ENCODE measurements at regions of chr6 and their contacts with region 1.

Region 1: DNA sequence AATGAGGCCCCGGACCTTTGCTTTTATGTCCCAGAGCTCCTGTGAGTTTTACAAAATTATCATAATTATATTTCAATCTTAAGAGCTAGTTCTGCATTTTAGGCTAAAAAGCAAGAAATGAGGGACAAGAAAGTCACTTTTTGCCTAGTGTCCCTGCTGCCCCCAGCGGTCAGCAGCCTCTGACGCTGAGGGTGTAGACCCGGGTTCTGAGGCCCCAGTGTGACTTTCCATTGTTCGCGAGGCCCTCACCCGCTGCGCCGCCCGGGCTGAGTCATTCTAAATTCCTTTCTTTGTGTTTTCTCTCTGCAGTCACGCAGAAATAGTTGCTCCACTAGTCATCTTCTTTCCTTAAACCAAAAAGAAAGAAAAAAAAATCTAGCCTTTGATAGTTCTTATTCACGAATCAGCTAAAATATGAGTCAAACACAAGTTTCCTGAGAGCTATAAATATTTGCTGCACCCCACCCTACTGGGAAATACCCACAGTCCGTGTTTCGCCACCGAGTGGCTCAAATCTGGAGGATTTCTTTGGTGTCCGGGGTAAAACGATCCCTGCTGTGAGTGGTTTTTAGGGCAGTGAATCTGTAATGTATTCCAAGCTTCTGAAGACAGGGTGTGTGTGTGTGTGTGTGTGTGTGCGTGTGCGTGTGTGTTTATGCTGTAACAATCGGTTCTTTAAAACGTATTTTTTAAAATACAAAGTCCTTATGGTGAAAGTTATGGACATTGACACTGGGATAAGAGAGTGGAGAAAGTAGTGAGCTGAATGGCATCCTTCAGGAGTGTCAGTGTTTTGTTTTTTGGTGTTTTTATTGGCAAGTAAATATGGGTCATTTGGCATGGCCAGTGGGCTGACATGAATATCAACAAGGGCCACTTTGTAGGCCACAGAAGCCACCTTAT is 59.7 kb upstream of the EEF1A1 start:
- DNase-seq: peak; percentile 89
- ATAC-seq: peak; percentile 92
- H3K4me3 Mint-ChIP-seq: peak overlapping the region; percentile 60
- H3K27ac Mint-ChIP-seq: peak overlapping the region; percentile 99
- H3K4me1 Mint-ChIP-seq: peaks cover 29% of the 10 kb centered on the region
- H3K27me3 Mint-ChIP-seq: no peaks in the 10 kb centered on the region

Region 2: GRCh38 chr6:73394577-73395354 is 185.7 kb before region 1 on chr6 and contains the start of gene DDX43:
- CTCF ChIA-PET with region 1: no interaction called
- POLR2A ChIA-PET with region 1: no interaction called
- intact Hi-C with region 1: no loop called
- DNase-seq: peak; percentile 78
- ATAC-seq: peak; percentile 94
- H3K4me3 Mint-ChIP-seq: peak within 1 kb of the TSS; percentile 76
- H3K27ac Mint-ChIP-seq: peak within 1 kb of the TSS; percentile 92
- H3K4me1 Mint-ChIP-seq: peaks cover 12% of the 10 kb centered on the region
- H3K27me3 Mint-ChIP-seq: no peaks in the 10 kb centered on the region
- total RNA-seq, gene DDX43: 0.51 to 0.66 TPM

Region 3: DNA sequence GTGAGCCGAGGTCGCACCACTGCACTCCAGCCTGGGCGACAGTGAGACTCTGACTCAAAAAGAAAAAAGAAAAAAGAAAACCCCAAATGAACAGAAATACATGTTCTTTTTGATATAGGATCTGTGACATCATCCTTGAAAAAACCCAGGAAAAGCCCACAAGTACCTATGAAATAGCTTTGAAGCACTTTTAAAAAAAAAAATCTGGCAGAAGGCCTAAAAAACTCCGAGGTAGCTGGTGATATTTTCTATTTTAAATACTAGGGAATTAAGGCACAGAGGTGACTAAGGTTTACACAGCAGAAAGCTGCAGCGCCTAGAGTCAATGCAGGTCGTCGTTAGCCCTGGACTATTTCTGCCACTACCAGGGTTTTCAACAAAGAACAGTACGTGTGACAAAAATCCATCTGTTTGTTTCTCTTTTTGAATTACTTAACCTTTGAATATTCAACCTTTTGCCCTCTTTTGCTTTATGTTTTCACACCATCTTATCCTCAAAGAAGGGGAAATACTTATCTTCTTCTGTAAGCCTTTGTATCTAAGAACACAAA is 20.2 kb before region 1 on chr6:
- CTCF ChIA-PET with region 1: interaction called, 12 read pairs
- POLR2A ChIA-PET with region 1: interaction called, 5 read pairs
- intact Hi-C with region 1: loop called (anchors 1 to 2 kb)
- DNase-seq: peak; percentile 24
- ATAC-seq: peak; percentile 70
- H3K4me3 Mint-ChIP-seq: no peak overlapping the region
- H3K27ac Mint-ChIP-seq: no peak overlapping the region
- H3K4me1 Mint-ChIP-seq: peaks cover 28% of the 10 kb centered on the region
- H3K27me3 Mint-ChIP-seq: no peaks in the 10 kb centered on the region

Region 4: GRCh38 chr6:73631849-73632248 is 51.4 kb after region 1 on chr6:
- CTCF ChIA-PET with region 1: no interaction called
- POLR2A ChIA-PET with region 1: no interaction called
- intact Hi-C with region 1: no loop called
- DNase-seq: no peak
- ATAC-seq: no peak
- H3K4me3 Mint-ChIP-seq: no peak overlapping the region
- H3K27ac Mint-ChIP-seq: no peak overlapping the region
- H3K4me1 Mint-ChIP-seq: no peaks in the 10 kb centered on the region
- H3K27me3 Mint-ChIP-seq: no peaks in the 10 kb centered on the region

Measured in activated CD4-positive, alpha-beta T cell treated with anti-CD3 and anti-CD28 coated beads for 36 hours (primary cell).